Activated CD4-positive, alpha-beta T cell treated with anti-CD3 and anti-CD28 coated beads for 36 hours (primary cell): ENCODE measurements at regions of chr17 and their contacts with region 1.

Region 1: GRCh38 chr17:28812091-28812747 is 30.4 kb downstream of the FAM222B start:
- DNase-seq: peak; percentile 99
- ATAC-seq: peak; percentile 99
- H3K4me3 Mint-ChIP-seq: peak overlapping the region; percentile 82
- H3K27ac Mint-ChIP-seq: peak overlapping the region; percentile 91
- H3K4me1 Mint-ChIP-seq: peaks cover 44% of the 10 kb centered on the region
- H3K27me3 Mint-ChIP-seq: no peaks in the 10 kb centered on the region

Region 2: DNA sequence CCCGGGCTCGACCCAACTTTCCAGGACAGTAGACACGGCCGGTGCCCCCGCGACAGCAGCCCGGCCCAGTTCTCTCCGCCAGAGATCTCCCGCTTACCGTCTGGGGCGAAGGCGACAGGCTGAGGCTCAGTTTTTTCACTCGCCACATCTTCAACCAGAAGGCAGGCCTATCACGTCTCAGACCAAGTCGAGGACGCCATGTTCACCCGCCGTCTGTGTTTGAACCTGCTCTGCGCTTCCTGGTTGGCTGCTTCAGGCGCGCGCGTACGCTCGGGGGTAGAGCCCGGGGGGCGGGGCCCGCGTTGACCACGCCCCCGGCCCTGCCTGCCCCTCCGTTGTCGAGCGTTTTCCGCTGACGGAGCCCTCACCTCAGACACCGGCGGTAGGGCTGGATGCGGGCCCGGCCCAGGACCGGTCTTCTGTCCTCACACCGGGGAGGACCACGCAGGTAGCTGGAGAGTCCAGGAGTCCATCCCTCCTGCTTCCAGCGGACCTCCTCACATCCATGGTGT is 213.4 kb before region 1 on chr17 and contains the start of gene SPAG5:
- CTCF ChIA-PET with region 1: no interaction called
- POLR2A ChIA-PET with region 1: interaction called, 5 read pairs
- intact Hi-C with region 1: loop called in 1 of 2 experiments (anchors 1 kb)
- DNase-seq: peak; percentile 97
- ATAC-seq: peak; percentile 92
- H3K4me3 Mint-ChIP-seq: peak within 1 kb of the TSS; percentile 89
- H3K27ac Mint-ChIP-seq: peak within 1 kb of the TSS; percentile 98
- H3K4me1 Mint-ChIP-seq: peaks cover 21% of the 10 kb centered on the region
- H3K27me3 Mint-ChIP-seq: no peaks in the 10 kb centered on the region
- total RNA-seq, gene SPAG5: 142 to 165 TPM

Region 3: DNA sequence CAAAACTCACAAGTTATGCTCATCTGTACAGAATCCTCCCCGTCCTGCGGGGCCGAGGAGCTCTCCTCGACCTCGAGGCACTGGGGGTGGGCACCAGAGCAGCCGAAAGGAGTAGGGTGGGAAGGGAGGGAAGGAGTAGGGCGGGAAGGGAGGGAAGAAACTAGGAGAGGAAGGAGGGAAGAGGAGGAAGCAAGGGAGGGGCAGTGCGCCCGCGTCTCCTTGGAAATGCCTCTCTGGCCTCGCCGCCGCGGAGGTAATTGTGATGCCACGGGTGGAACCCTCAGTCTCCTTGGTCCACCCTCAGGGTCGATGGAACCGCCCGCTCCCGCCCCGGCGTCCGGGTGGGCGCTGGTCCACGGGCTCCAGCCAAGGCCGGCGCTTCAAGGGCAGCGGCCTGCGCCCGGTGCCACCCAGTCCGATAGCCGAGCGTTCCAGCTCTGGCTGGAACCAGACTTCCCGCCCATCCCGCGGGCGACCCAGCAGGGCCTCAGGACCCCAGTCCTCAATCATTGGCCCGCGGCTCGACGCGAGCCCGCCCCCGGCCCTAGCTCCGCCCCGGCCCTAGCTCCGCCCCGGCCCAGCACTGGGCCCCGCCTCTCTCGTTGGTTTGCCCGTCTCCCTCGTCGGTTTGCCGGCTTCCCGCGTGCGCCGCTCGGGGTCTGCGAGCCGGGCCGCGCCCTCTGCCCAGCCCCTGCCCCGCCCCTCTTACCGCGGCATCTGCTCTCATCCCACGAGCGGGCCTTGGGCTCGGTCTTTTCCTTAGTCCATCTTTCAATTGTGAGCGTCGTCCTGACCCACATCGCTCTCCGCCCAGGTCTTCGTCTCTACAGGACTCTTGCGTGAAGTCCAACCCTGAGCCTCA is 101.1 kb before region 1 on chr17:
- CTCF ChIA-PET with region 1: no interaction called
- POLR2A ChIA-PET with region 1: no interaction called
- intact Hi-C with region 1: no loop called
- DNase-seq: peak; percentile 94
- ATAC-seq: peak; percentile 90
- H3K4me3 Mint-ChIP-seq: peak overlapping the region; percentile 80
- H3K27ac Mint-ChIP-seq: peak overlapping the region; percentile 91
- H3K4me1 Mint-ChIP-seq: peaks cover 19% of the 10 kb centered on the region
- H3K27me3 Mint-ChIP-seq: peaks cover 17% of the 10 kb centered on the region

Region 4: GRCh38 chr17:28842282-28843012 is 30.2 kb after region 1 on chr17 and contains the start of gene FAM222B:
- CTCF ChIA-PET with region 1: interaction called, 4 read pairs
- POLR2A ChIA-PET with region 1: interaction called, 11 read pairs
- intact Hi-C with region 1: loop called (anchors 1 kb)
- DNase-seq: peak; percentile 93
- ATAC-seq: peak; percentile 99
- H3K4me3 Mint-ChIP-seq: peak within 1 kb of the TSS; percentile 93
- H3K27ac Mint-ChIP-seq: peak within 1 kb of the TSS; percentile 90
- H3K4me1 Mint-ChIP-seq: peaks cover 20% of the 10 kb centered on the region
- H3K27me3 Mint-ChIP-seq: no peaks in the 10 kb centered on the region
- total RNA-seq, gene FAM222B: 16.8 to 20.8 TPM

Region 5: DNA sequence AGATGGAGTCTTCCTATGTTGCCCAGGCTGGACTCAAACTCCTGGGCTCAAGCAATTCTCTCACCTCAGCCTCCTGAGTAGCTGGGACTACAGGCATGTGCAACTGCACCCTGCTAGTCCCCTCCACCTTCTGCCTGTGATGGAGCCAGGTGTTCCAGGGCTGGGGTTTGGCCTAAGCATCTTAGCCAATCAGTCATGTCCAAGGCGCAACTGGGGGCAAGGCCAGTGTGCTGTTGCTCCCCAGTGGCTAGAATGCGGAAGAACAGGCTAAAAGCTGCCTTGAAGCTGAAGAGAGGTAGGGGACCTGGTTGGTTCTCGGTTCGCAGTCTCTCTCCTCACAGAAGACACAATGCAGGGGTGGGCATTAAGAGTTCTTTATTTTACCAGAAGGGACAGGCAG is 66.8 kb after region 1 on chr17:
- CTCF ChIA-PET with region 1: no interaction called
- POLR2A ChIA-PET with region 1: no interaction called
- intact Hi-C with region 1: loop called in 1 of 2 experiments (anchors 1 kb)
- DNase-seq: peak; percentile 55
- ATAC-seq: no peak
- H3K4me3 Mint-ChIP-seq: no peak overlapping the region
- H3K27ac Mint-ChIP-seq: no peak overlapping the region
- H3K4me1 Mint-ChIP-seq: peaks cover 31% of the 10 kb centered on the region
- H3K27me3 Mint-ChIP-seq: no peaks in the 10 kb centered on the region

Region 6: DNA sequence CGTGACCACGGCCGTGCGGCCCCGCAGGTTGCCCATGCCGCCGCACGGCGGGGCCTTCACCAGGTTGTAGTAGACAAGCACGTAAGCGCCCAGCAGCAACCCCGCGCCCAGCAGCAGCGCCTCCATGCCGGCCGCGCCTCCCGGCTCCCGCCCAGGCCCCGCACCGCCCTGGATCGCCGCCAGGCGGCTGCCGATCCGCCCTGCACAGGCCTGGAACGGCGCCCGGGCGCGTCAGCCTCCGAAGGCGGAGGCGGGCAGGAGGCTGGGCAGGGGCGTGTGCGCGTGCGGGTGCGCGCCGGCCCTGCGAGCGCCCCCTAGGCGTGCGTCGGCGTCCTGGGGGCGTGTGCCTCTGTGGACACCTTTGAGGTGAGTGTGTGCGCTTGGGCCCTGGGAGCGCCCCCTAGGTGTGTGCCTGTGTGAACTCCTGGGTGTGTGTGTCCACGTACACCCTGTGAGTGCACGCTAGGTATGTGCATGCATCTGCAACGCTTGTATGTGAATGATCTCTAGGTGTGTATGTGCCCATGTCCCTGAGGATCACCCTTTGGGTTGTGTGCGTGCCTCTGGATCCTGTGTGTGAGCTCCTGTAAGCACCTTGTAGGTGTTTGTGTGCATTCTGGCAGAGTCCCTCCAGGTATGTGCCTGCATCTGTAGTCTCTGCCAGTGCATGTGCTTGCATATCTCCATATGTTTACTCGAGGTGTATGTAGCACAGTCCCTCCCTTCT is 90.8 kb after region 1 on chr17 and contains the start of gene DHRS13:
- CTCF ChIA-PET with region 1: interaction called, 5 read pairs
- POLR2A ChIA-PET with region 1: no interaction called
- intact Hi-C with region 1: loop called in 1 of 2 experiments (anchors 1 kb)
- DNase-seq: peak; percentile 97
- ATAC-seq: peak; percentile 89
- H3K4me3 Mint-ChIP-seq: peak within 1 kb of the TSS; percentile 87
- H3K27ac Mint-ChIP-seq: peak within 1 kb of the TSS; percentile 92
- H3K4me1 Mint-ChIP-seq: peaks cover 34% of the 10 kb centered on the region
- H3K27me3 Mint-ChIP-seq: no peaks in the 10 kb centered on the region
- total RNA-seq, gene DHRS13: 23.3 to 29.5 TPM

Region 7: GRCh38 chr17:29140051-29140621 is 327.9 kb after region 1 on chr17:
- CTCF ChIA-PET with region 1: no interaction called
- POLR2A ChIA-PET with region 1: interaction called, 7 read pairs
- intact Hi-C with region 1: loop called in 1 of 2 experiments (anchors 2 kb)
- DNase-seq: peak; percentile 92
- ATAC-seq: peak; percentile 60
- H3K4me3 Mint-ChIP-seq: peak overlapping the region; percentile 89
- H3K27ac Mint-ChIP-seq: peak overlapping the region; percentile 97
- H3K4me1 Mint-ChIP-seq: peaks cover 74% of the 10 kb centered on the region
- H3K27me3 Mint-ChIP-seq: no peaks in the 10 kb centered on the region